Dorsolateral prefrontal cortex (tissue), 120 donors: ENCODE measurements at regions of chr11 and their contacts with region 1.

Region 1: GRCh38 chr11:1502954-1503707 is 16.6 kb upstream of the MOB2 start:
- DNase-seq: peak in 9 of 10 donors; percentile 53 to 94 (median 76)
- H3K4me3 ChIP-seq: peak overlapping the region in 6 of 59 donors; percentile 1 to 18 (median 8)
- H3K27ac ChIP-seq: peak overlapping the region in 23 of 59 donors; percentile 4 to 60 (median 32)
- H3K27me3 ChIP-seq: no peaks in the 10 kb centered on the region
- CTCF ChIP-seq: no peak

Region 2: GRCh38 chr11:1163911-1164735 is 339.0 kb before region 1 on chr11:
- intact Hi-C with region 1: no loop called
- DNase-seq: peak in 3 of 10 donors; percentile 27 to 34 (median 33)
- H3K4me3 ChIP-seq: no peak overlapping the region
- H3K27ac ChIP-seq: no peak overlapping the region
- H3K27me3 ChIP-seq: peaks cover 0 to 10% (median 0%) of the 10 kb centered on the region in 45 donors
- CTCF ChIP-seq: no peak

Region 3: GRCh38 chr11:1193326-1194230 is 309.6 kb before region 1 on chr11:
- intact Hi-C with region 1: no loop called
- DNase-seq: peak in 4 of 10 donors; percentile 2 to 42 (median 28)
- H3K4me3 ChIP-seq: no peak overlapping the region
- H3K27ac ChIP-seq: no peak overlapping the region
- H3K27me3 ChIP-seq: peaks cover 0 to 40% (median 18%) of the 10 kb centered on the region in 45 donors
- CTCF ChIP-seq: no peak

Region 4: DNA sequence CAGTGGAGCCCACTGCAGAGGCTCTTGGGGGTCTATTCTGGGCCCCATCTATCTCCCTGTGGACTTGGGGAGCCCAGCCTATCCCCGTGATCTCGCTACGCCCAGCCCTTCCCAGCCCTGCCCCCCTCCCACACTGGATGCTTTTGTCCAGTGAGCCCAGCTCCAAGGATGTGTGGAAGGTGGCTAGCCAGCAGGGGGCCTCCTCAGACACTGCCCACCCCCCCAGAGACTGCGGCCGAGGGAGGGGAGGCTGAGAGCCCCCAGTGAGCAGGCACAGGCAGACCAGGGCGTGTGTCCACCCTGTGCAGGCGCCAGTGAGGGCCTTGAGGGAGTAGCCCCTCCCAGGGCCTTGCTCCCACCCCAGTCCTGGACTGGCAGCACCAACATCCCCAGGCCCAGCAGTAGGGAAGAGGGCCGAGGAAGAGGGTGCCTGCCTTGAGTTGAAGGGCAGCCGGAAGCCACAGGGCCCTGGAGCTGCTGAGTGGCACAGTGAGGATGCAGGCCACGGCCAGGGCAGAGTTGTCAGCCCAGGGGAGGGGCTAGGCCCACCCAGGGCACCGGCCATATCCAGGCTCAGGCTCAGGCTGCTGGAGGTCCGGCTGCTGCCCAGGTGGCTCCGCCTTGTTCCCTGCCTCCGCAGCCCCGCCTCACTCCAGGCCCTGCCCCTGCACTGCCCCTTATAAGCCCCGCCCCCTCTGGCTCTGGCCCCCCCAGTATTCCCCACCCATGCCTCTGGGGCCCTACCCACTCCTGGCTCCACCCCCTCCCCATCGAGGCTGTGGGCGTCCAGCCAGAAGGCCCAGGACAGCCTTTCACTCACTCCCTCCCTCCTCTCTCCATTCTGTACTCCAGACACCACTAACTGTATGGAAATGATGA is 44.6 kb before region 1 on chr11:
- intact Hi-C with region 1: loop called in 1 of 2 experiments (anchors 5 kb)
- DNase-seq: peak in 4 of 10 donors; percentile 35 to 58 (median 52)
- H3K4me3 ChIP-seq: no peak overlapping the region
- H3K27ac ChIP-seq: peak overlapping the region in 56 of 59 donors; percentile 49 to 93 (median 78)
- H3K27me3 ChIP-seq: no peaks in the 10 kb centered on the region
- CTCF ChIP-seq: peak in 43 of 56 donors; percentile 19 to 50 (median 32)

Region 5: GRCh38 chr11:1469911-1470680 is 33.0 kb before region 1 on chr11:
- intact Hi-C with region 1: loop called in 1 of 2 experiments (anchors 5 kb)
- DNase-seq: no peak
- H3K4me3 ChIP-seq: no peak overlapping the region
- H3K27ac ChIP-seq: no peak overlapping the region
- H3K27me3 ChIP-seq: no peaks in the 10 kb centered on the region
- CTCF ChIP-seq: no peak